Naive thymus-derived CD4-positive, alpha-beta T cell (primary cell): ENCODE measurements at regions of chr14 and their contacts with region 1.

Region 1: DNA sequence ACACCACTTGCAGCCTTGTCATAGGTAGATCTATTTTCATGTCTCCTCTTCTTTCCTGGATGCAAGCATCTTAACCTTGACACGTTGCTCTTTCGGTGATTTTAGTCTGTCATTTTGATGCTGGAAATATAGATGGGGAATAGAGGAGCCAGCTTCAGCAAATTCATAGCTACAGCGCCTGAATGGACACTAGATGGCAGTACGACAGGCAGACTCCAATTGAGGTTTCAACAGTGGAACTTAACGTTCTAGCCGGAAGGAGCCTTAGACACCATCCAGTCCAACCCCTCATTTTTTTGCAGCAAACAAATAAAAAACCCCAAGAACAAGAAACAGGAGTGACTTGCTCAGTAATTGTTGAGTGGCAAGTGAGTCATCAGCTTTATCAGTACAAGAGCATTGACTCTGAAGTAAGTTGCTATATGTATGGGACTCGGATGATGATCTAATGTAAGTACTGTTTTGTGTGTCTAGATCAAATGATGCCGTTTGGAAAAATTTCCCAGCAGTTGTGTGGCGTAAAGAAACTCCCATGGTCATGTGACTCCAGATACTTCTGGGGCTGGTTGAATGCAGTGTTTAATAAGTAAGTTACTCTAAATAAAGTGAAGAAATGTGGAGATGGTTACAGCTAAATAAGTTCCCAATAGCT is 9.0 kb downstream of the DMAC2L start:
- DNase-seq: peak in 8 of 9 donors; percentile 52 to 83 (median 76)
- ATAC-seq: peak; percentile 99
- H3K4me3 ChIP-seq: peak overlapping the region; percentile 15
- H3K4me3 Mint-ChIP-seq: no peak overlapping the region
- H3K27ac ChIP-seq: peak overlapping the region; percentile 11
- H3K27ac Mint-ChIP-seq: no peak overlapping the region
- H3K4me1 ChIP-seq: peaks cover 0 to 4% of the 10 kb centered on the region in 2 donors
- H3K4me1 Mint-ChIP-seq: peaks cover 8 to 34% (median 27%) of the 10 kb centered on the region in 7 donors
- H3K27me3 ChIP-seq: no peaks in the 10 kb centered on the region
- H3K27me3 Mint-ChIP-seq: no peaks in the 10 kb centered on the region

Region 2: DNA sequence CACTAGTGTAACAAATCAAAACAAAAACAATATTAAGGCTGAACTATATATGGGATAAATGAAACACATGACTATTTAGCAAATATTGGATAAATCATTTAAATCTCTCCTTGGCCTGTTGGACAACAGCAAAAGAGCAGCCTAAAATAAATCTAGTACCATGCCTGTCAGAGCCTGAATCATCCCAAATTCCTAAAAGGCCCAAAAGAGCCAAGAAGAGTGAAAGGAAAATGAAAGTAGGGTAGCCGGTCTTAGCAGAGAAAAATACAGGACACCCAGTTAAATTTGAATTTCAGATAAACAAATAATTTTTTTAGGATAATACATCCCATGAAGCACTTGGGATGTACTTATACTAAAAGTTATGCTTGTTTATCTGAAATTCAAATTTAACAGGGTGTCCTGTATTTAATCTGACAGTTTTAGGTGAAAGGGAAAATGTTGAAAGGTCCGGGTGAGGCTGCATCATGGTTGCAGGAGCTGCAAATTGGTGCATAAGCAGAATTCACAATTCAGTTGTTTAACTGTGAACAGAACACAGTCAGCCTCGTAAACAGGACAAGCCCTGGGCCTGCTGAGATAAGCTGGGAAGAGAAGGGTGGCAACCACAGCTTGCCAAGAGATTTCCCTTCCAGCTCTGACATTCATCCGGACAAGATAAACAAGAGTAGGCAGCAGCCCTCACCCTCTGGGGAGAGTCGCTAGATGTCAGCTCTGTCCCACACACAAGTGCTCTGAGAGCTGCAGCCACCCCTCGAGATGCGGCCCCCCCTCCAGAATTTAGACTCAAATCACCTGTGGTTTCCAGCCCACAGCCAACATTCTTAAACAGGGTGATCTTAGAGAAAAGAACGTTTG is 21.3 kb after region 1 on chr14:
- CTCF ChIA-PET with region 1: no interaction called
- POLR2A ChIA-PET with region 1: no interaction called
- intact Hi-C with region 1: loop called (anchors 1 to 2 kb)
- DNase-seq: peak in 7 of 9 donors; percentile 22 to 59 (median 39)
- ATAC-seq: peak; percentile 83
- H3K4me3 ChIP-seq: no peak overlapping the region
- H3K4me3 Mint-ChIP-seq: peak overlapping the region in 1 of 10 donors; percentile 59
- H3K27ac ChIP-seq: no peak overlapping the region
- H3K27ac Mint-ChIP-seq: peak overlapping the region in 2 of 9 donors; percentile 31 to 66
- H3K4me1 ChIP-seq: no peaks in the 10 kb centered on the region
- H3K4me1 Mint-ChIP-seq: peaks cover 0 to 23% (median 16%) of the 10 kb centered on the region in 7 donors
- H3K27me3 ChIP-seq: no peaks in the 10 kb centered on the region
- H3K27me3 Mint-ChIP-seq: peaks cover 0 to 11% (median 0%) of the 10 kb centered on the region in 5 donors

Region 3: DNA sequence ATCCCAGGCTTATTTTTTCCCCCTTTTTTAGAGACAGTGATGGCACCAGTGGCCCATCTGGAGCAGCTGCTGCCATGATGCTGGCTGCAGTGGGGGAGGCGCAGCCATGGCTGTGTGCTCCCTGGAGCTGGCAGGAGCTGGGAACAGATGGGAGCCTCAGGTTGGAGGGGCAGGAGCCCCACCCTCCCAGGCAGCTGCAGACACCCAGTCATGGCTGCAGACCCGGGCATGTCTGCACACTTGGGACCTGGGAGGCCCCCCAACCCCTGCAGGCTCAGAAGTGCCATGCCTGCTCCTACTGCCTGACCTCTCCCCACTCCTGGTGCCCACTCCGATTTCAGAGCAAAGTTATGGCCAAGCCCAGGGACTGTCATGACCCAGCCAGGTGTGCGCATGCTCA is 50.4 kb after region 1 on chr14:
- CTCF ChIA-PET with region 1: no interaction called
- POLR2A ChIA-PET with region 1: no interaction called
- intact Hi-C with region 1: no loop called
- DNase-seq: no peak
- ATAC-seq: no peak
- H3K4me3 ChIP-seq: no peak overlapping the region
- H3K4me3 Mint-ChIP-seq: no peak overlapping the region
- H3K27ac ChIP-seq: no peak overlapping the region
- H3K27ac Mint-ChIP-seq: no peak overlapping the region
- H3K4me1 ChIP-seq: no peaks in the 10 kb centered on the region
- H3K4me1 Mint-ChIP-seq: peaks cover 0 to 9% (median 5%) of the 10 kb centered on the region in 7 donors
- H3K27me3 ChIP-seq: no peaks in the 10 kb centered on the region
- H3K27me3 Mint-ChIP-seq: peaks cover 0 to 18% (median 0%) of the 10 kb centered on the region in 5 donors

Region 4: GRCh38 chr14:50396631-50397390 is 75.7 kb after region 1 on chr14 and contains the start of gene CDKL1:
- CTCF ChIA-PET with region 1: no interaction called
- POLR2A ChIA-PET with region 1: no interaction called
- intact Hi-C with region 1: loop called (anchors 1 kb)
- DNase-seq: peak; percentile 9 to 74 (median 17)
- ATAC-seq: peak; percentile 78
- H3K4me3 ChIP-seq: peak within 1 kb of the TSS; percentile 78
- H3K4me3 Mint-ChIP-seq: peak within 1 kb of the TSS; percentile 83 to 95 (median 89)
- H3K27ac ChIP-seq: no peak within 1 kb of the TSS
- H3K27ac Mint-ChIP-seq: peak within 1 kb of the TSS in 8 of 9 donors; percentile 14 to 80 (median 44)
- H3K4me1 ChIP-seq: no peaks in the 10 kb centered on the region
- H3K4me1 Mint-ChIP-seq: peaks cover 11 to 24% (median 12%) of the 10 kb centered on the region in 7 donors
- H3K27me3 ChIP-seq: no peaks in the 10 kb centered on the region
- H3K27me3 Mint-ChIP-seq: peaks cover 0 to 24% (median 6%) of the 10 kb centered on the region in 5 donors
- total RNA-seq, gene CDKL1: 2.6 to 14.8 (median 4.9) TPM

Region 5: DNA sequence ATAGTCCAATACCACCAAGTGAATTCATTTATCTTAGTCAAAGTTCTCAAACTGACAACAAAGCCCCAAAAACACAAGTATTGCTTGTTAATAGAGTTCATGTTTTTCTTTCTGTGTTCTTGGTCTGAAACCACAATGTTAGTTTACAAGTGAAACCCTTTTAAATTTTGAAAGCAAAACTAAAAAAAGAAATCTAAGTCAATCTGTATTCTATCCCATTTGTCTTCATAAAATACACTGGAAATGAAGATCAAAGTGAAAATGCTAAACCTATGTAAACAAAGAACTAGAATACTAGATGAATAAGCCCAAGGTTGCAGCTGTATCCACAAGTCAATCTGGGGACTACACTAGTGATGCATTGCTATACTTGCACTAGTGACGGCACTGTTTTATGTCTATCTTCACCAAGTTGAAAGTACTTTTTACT is 200.8 kb after region 1 on chr14:
- CTCF ChIA-PET with region 1: interaction called, 3 read pairs
- POLR2A ChIA-PET with region 1: no interaction called
- intact Hi-C with region 1: loop called in 1 of 2 experiments (anchors 1 kb)
- DNase-seq: peak in 1 of 9 donors; percentile 11
- ATAC-seq: peak; percentile 39
- H3K4me3 ChIP-seq: no peak overlapping the region
- H3K4me3 Mint-ChIP-seq: peak overlapping the region in 7 of 10 donors; percentile 2 to 77 (median 48)
- H3K27ac ChIP-seq: no peak overlapping the region
- H3K27ac Mint-ChIP-seq: peak overlapping the region in 5 of 9 donors; percentile 14 to 87 (median 45)
- H3K4me1 ChIP-seq: peaks cover 10 to 11% of the 10 kb centered on the region in 2 donors
- H3K4me1 Mint-ChIP-seq: peaks cover 48 to 61% (median 54%) of the 10 kb centered on the region in 7 donors
- H3K27me3 ChIP-seq: no peaks in the 10 kb centered on the region
- H3K27me3 Mint-ChIP-seq: no peaks in the 10 kb centered on the region

Region 6: DNA sequence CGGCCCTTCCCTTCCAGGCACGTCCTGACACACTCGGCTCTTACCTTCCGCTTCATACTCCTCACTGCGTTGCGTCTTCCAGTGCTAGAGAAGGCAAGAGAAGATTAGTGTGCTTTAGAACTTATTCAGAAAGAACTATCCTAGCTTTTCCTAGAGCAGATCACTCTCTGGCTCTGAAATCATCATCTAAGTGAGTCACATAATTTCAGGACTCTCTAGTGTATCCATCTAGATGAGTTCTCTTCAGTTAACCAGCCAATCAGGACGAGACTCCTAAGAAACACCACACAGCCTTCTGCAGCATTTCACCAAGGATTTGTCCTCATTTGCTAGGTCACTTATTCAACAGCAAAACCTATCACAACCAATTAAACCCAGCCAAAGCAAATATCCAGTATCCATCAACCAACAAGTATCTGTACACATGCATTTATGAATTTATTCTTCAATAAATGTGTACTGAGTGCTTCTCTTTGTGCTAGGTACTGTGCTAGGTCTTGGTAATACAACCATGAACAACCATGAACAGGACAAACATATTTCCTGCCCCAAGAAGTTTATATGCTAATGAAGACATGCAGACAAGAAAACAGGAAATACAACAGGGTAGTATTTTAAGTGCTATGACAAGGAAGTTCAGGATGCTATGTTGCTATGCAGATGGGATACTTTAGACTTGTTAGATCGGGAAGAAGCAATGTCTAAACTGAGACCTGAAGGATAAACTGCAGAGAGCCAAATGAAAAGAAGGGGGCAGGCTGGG is 457.8 kb after region 1 on chr14:
- CTCF ChIA-PET with region 1: interaction called, 6 read pairs
- POLR2A ChIA-PET with region 1: no interaction called
- intact Hi-C with region 1: loop called in 1 of 2 experiments (anchors 2 kb)
- DNase-seq: no peak
- ATAC-seq: no peak
- H3K4me3 ChIP-seq: no peak overlapping the region
- H3K4me3 Mint-ChIP-seq: peak overlapping the region in 4 of 10 donors; percentile 39 to 63 (median 50)
- H3K27ac ChIP-seq: no peak overlapping the region
- H3K27ac Mint-ChIP-seq: peak overlapping the region in 8 of 9 donors; percentile 61 to 97 (median 88)
- H3K4me1 ChIP-seq: peaks cover 31 to 32% of the 10 kb centered on the region in 2 donors
- H3K4me1 Mint-ChIP-seq: peaks cover 26 to 76% (median 66%) of the 10 kb centered on the region in 7 donors
- H3K27me3 ChIP-seq: no peaks in the 10 kb centered on the region
- H3K27me3 Mint-ChIP-seq: no peaks in the 10 kb centered on the region